ENCODE measurements at regions of chr7 and their contacts with region 1.

Region 1: DNA sequence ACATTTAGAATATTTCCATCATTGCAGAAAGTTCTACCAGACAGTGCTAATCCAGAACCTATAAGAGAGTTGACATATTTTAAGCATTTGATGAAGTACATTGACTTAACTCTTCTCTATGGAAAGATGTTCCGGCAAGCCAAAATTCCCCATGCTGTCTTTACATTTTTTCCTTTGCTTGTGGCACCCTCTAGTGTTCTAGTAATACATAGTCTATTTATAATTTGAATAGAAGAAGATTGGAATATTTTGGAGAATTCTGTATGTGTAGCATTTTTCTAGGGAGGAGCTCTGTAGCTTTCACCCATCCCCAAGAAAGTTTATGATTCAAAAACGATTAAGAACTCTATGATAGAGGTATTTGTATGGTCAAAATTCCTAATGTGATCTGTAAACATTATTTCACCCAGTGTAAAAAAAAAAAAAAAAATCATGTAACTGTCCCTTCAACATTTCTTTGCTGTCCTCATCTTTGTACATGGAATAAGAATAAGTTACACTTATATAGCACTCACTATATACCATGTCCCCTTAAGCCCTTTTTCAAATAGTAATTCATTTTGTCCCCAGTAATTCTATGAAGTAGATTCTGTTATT is 33.2 kb downstream of the NRF1 start:
- DNase-seq: peak; percentile 38
- ATAC-seq: peak; percentile 60
- H3K4me3 ChIP-seq: no peak overlapping the region
- H3K27ac ChIP-seq: no peak overlapping the region
- H3K4me1 ChIP-seq: peaks cover 8 to 16% of the 10 kb centered on the region in 2 experiments; a peak in 3 of 4 replicates
- H3K27me3 ChIP-seq: no peaks in the 10 kb centered on the region
- CTCF ChIP-seq: peak; percentile 33 to 64 (median 59)
- POLR2A ChIP-seq: no peak
- RAD21 ChIP-seq: peak; percentile 76

Region 2: DNA sequence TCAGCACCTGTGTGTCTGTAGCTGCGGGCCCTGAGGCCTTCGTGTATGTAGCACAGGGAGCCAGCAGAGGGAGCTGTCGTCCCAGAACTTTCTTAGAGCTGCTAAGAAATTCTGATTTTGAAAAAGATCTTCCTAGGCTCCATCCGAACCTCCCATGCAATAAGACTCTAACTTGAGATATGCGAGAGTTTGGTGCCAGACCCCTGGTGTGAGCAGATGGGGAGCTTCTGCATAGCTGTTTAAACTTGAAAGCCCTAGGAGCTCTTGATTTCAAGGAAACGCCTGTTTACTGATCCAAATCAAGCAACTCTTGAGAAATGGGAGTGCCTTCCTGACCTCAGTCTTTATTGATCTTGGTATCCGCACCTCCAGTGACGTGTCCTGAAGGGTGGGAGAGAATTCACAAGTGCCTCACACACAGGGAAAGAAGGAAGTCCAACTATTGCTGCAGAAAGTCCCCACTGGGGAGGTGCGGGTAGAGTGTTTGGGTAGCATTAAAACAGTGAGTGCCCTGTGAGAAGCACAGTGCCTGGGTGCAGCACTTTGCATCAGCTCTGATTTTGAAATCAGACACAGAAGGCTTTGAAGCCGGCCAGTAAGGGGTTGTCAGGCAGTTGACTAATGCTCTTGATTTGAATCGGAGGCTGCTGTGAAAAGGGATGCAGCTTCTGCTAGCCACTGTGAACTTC is 276.9 kb before region 1 on chr7:
- CTCF ChIA-PET with region 1: interaction called, 13 read pairs
- POLR2A ChIA-PET with region 1: no interaction called
- RAD21 ChIA-PET with region 1: interaction called in 1 of 2 experiments, 3 read pairs
- intact Hi-C with region 1: loop called (anchors 2 kb)
- DNase-seq: peak; percentile 49
- ATAC-seq: peak; percentile 95
- H3K4me3 ChIP-seq: no peak overlapping the region
- H3K27ac ChIP-seq: no peak overlapping the region
- H3K4me1 ChIP-seq: peaks cover 2 to 8% of the 10 kb centered on the region in 2 experiments; a peak in 2 of 4 replicates
- H3K27me3 ChIP-seq: no peaks in the 10 kb centered on the region
- CTCF ChIP-seq: peak; percentile 80 to 90 (median 86)
- POLR2A ChIP-seq: no peak
- RAD21 ChIP-seq: peak; percentile 91

Region 3: DNA sequence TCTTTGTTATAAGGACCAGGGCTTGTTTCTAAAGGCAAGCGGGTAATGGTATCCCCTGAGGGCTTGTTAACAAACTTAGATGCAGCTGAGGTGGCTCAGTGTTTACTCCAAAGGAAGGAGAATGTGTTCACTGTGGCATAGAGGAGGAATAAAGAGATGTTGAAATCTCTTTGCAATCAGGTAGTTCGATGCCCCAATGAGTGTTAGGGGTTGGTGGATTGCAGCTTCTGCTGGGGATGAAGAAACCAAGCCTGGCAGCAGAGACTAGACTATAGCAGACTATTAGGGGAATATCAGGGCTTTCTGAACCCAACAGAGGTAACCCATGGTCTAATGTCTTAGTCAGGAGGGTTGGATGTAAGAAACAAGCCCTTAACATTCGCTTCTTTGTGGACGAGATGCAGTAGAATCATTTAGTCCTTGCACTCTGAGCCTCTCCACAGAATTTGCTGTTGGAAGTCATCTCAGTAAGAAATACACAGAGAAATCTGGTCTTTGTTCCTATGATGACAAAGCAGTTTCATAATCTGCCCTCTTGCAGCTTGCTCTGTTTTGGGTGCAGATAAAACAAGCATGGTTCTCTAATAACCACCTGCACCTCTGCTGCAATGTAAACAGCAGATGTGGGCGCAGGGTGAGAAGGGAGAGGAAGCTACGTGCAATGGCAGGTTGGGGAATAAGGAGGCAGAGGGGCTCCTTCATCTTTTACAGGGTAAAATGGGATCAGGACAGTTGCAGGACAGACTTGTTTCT is 75.4 kb after region 1 on chr7:
- CTCF ChIA-PET with region 1: no interaction called
- POLR2A ChIA-PET with region 1: no interaction called
- RAD21 ChIA-PET with region 1: no interaction called
- intact Hi-C with region 1: no loop called
- DNase-seq: no peak
- ATAC-seq: no peak
- H3K4me3 ChIP-seq: no peak overlapping the region
- H3K27ac ChIP-seq: no peak overlapping the region
- H3K4me1 ChIP-seq: no peaks in the 10 kb centered on the region
- H3K27me3 ChIP-seq: no peaks in the 10 kb centered on the region
- CTCF ChIP-seq: no peak
- POLR2A ChIP-seq: no peak
- RAD21 ChIP-seq: no peak